Left lung (tissue), 14 donors: ENCODE measurements at regions of chr16 and their contacts with region 1.

Region 1: DNA sequence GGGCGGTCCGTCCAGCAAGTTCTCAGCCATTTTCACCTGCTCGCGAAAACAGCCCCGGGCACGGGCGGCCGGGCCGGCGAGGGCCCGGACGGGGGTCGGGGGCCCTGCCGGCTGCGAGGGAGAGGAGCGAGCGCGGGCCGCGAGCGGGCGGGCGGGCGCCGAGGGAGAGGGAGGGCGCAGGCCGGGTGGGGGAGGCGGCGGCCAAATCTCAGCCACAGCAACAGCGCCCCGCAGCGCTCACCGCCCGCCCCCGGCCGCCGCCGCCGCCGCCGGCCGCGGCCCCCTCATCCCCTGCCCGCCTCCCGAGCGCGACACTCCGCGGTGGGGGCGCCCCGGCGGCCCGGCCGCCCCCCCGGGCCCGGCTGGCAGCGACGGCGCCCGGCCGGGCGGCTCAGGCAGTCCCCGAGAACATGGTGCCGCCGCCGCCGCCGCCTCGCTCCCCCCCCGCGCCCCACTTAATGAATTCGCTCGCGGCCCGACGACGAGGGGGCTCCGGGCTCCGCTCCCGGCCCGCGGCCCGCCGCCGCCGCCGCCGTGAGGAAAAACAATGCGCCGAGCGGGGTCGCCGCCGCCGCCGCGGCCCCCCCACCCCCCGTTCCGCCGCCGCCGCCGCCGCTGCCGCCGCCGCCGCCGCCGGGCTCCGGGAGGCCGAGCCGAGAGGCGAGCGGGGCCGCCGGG is 487 bp downstream of the CREBBP start:
- DNase-seq: peak; percentile 63 to 94 (median 82)
- ATAC-seq: peak; percentile 77
- H3K4me3 ChIP-seq: peak overlapping the region; percentile 86 to 90
- H3K27ac ChIP-seq: peak overlapping the region; percentile 70 to 80
- H3K4me1 ChIP-seq: peaks cover 28 to 44% of the 10 kb centered on the region in 2 donors
- H3K27me3 ChIP-seq: peaks cover 0 to 4% of the 10 kb centered on the region in 2 donors
- CTCF ChIP-seq: no peak

Region 2: DNA sequence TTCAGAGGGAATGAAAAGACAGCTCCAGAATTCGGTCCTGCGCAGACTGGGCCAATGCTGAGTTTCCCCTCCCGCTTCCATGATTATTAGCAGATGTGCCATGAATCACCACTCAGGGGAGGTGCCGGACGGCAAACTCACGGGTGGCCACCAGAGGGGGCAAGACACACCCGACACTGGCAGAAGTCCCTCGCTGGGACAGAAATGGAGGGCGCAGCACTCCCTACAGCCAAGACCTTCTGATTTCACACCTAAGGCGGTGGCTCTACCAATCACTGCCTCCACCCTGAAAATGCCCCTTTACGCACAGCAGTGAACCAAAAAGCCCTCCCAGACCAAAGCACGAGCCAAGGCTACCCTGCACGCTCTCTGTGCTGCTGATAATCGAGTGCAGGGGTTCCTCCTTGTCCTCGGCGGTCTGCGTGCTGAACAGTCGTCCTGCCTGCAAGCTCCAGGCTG is 189.5 kb before region 1 on chr16:
- intact Hi-C with region 1: loop called in 1 of 2 experiments (anchors 10 kb)
- DNase-seq: peak; percentile 81 to 94 (median 89)
- ATAC-seq: peak; percentile 99
- H3K4me3 ChIP-seq: no peak overlapping the region
- H3K27ac ChIP-seq: no peak overlapping the region
- H3K4me1 ChIP-seq: peaks cover 7% of the 10 kb centered on the region in 2 donors
- H3K27me3 ChIP-seq: no peaks in the 10 kb centered on the region
- CTCF ChIP-seq: peak; percentile 80 to 93

Region 3: DNA sequence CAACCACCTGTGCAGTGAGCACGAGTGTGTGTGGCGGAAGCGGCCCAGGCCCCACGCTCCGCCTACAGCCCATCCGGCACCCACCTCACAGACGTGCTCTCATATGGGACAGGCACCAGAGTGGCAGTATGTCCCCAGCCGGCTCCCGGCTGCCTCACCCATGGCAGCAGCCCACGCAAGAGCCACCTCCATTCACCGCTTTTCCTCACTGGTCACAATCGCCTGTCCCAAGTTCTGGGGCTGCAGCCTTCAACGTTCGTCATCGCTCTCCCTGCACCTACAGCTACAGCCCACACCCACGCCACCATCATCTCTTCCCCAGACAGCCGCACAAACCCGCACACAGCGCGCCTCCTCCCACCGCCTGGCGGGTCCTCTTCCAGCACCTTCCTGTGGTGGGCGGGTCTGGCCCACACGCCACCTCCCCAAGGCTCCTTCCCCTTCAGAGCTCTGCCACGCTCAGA is 145.2 kb before region 1 on chr16:
- intact Hi-C with region 1: no loop called
- DNase-seq: no peak
- ATAC-seq: no peak
- H3K4me3 ChIP-seq: no peak overlapping the region
- H3K27ac ChIP-seq: no peak overlapping the region
- H3K4me1 ChIP-seq: no peaks in the 10 kb centered on the region
- H3K27me3 ChIP-seq: no peaks in the 10 kb centered on the region
- CTCF ChIP-seq: no peak

Region 4: GRCh38 chr16:3793161-3793576 is 86.9 kb before region 1 on chr16:
- intact Hi-C with region 1: loop called in 1 of 2 experiments (anchors 10 kb)
- DNase-seq: no peak
- ATAC-seq: peak; percentile 44
- H3K4me3 ChIP-seq: no peak overlapping the region
- H3K27ac ChIP-seq: no peak overlapping the region
- H3K4me1 ChIP-seq: peaks cover 7 to 26% of the 10 kb centered on the region in 2 donors
- H3K27me3 ChIP-seq: no peaks in the 10 kb centered on the region
- CTCF ChIP-seq: no peak